Lower leg skin (tissue), 4 donors: ENCODE measurements at regions of chr6 and their contacts with region 1.

Region 1: GRCh38 chr6:21603082-21603952 is 9.8 kb downstream of the SOX4 start:
- DNase-seq: no peak
- H3K4me3 ChIP-seq: no peak overlapping the region
- CTCF ChIP-seq: no peak
- POLR2A ChIP-seq: no peak

Region 2: DNA sequence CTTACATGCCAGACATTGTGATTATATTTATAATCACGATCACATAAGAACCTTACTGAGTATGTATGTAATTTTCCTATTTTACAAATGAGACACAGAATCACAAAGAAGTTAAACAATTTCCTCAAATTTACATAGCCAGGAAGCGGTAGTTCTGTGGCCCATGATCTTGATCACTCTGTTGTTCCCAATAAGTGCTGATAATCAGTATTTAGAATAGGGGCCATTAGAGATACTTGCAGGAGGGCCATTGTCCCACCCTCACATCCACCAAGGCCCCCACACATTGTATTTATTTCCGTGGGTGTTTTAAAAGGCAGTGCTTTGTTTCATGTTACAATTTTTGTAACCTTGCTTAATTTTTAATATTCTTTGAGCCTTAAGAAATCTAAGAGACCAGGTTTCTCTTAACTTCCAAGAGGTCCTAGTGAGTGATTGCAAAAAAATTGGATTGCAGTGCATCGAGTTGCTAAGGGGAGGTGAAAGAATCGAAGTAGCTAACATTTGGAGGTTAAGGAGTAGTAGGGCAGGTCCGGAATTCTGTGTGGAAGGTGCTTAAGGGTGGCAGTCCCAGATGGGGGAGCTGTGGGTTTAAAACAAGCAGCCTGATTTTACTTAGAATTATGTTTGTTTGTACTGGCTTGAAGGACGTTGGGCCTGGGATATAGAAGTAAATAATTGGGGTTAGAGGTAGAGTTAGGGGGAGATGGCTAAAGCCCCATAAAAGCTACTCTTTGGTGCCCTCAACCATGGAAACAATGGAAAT is 729.7 kb before region 1 on chr6:
- intact Hi-C with region 1: loop called (anchors 5 kb)
- DNase-seq: no peak
- H3K4me3 ChIP-seq: no peak overlapping the region
- CTCF ChIP-seq: no peak
- POLR2A ChIP-seq: no peak